ENCODE measurements at regions of chr18 and their contacts with region 1.

Region 1: GRCh38 chr18:38810789-38811188 is 1245.2 kb upstream of the CELF4 start:
- DNase-seq: no peak
- ATAC-seq: no peak
- H3K4me3 ChIP-seq: no peak overlapping the region
- H3K27ac ChIP-seq: no peak overlapping the region
- H3K4me1 ChIP-seq: no peaks in the 10 kb centered on the region
- H3K27me3 ChIP-seq: no peaks in the 10 kb centered on the region
- CTCF ChIP-seq: no peak
- POLR2A ChIP-seq: no peak

Region 2: GRCh38 chr18:38872342-38872741 is 61.6 kb after region 1 on chr18:
- in situ Hi-C with region 1: loop called in 1 of 4 experiments (anchors 10 kb)
- intact Hi-C with region 1: no loop called
- DNase-seq: no peak
- ATAC-seq: no peak
- H3K4me3 ChIP-seq: no peak overlapping the region
- H3K27ac ChIP-seq: no peak overlapping the region
- H3K4me1 ChIP-seq: no peaks in the 10 kb centered on the region
- H3K27me3 ChIP-seq: no peaks in the 10 kb centered on the region
- CTCF ChIP-seq: no peak
- POLR2A ChIP-seq: no peak

Measured in gastrocnemius medialis (tissue), 4 donors.